Ascending aorta (tissue), 2 donors: ENCODE measurements at regions of chr18 and their contacts with region 1.

Region 1: DNA sequence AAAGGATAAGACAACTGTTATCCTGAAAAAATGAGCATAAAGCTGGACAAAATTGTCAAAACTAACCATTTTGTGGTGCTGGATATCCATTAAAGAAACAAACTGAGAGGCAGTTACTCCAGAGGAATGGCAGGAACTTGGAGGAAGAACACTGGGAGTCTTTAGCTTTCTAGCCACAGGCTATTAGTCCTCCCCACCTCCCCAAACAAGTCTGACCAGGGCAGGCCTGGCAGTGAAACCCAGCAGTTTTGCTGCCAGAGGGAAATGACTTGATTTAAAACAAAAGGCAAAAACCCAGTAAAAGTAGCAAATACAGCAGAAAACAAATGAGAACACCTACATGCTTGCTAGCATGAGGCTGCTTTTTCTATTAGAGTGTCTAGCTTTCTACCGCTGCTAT is 34.9 kb downstream of the OSBPL1A start:
- DNase-seq: no peak
- H3K4me3 ChIP-seq: no peak overlapping the region
- H3K27ac ChIP-seq: no peak overlapping the region
- H3K4me1 ChIP-seq: no peaks in the 10 kb centered on the region
- H3K27me3 ChIP-seq: no peaks in the 10 kb centered on the region
- CTCF ChIP-seq: no peak

Region 2: GRCh38 chr18:24426398-24427294 is 63.9 kb after region 1 on chr18 and contains the start of gene IMPACT:
- intact Hi-C with region 1: loop called (anchors 5 kb)
- DNase-seq: peak; percentile 19 to 85
- H3K4me3 ChIP-seq: peak within 1 kb of the TSS; percentile 82 to 96
- H3K27ac ChIP-seq: peak within 1 kb of the TSS; percentile 78 to 79
- H3K4me1 ChIP-seq: peaks cover 6 to 7% of the 10 kb centered on the region in 2 donors
- H3K27me3 ChIP-seq: no peaks in the 10 kb centered on the region
- CTCF ChIP-seq: no peak
- total RNA-seq, gene IMPACT: 38.2 TPM

Region 3: GRCh38 chr18:24488824-24489493 is 126.2 kb after region 1 on chr18:
- intact Hi-C with region 1: loop called (anchors 1 kb)
- DNase-seq: no peak
- H3K4me3 ChIP-seq: no peak overlapping the region
- H3K27ac ChIP-seq: no peak overlapping the region
- H3K4me1 ChIP-seq: no peaks in the 10 kb centered on the region
- H3K27me3 ChIP-seq: no peaks in the 10 kb centered on the region
- CTCF ChIP-seq: peak; percentile 34 to 80 (median 79)

Region 4: GRCh38 chr18:24726727-24727492 is 364.2 kb after region 1 on chr18:
- intact Hi-C with region 1: loop called (anchors 2 kb)
- DNase-seq: no peak
- H3K4me3 ChIP-seq: peak overlapping the region; percentile 26 to 60
- H3K27ac ChIP-seq: peak overlapping the region in 1 of 2 donors; percentile 52
- H3K4me1 ChIP-seq: no peaks in the 10 kb centered on the region
- H3K27me3 ChIP-seq: no peaks in the 10 kb centered on the region
- CTCF ChIP-seq: peak; percentile 41 to 88 (median 73)